SK-N-SH (cell line): ENCODE measurements at regions of chr7 and their contacts with region 1.

Region 1: GRCh38 chr7:66642186-66642585 is 13.5 kb downstream of the KCTD7 start:
- DNase-seq: peak; percentile 34
- H3K4me3 ChIP-seq: no peak overlapping the region
- H3K27ac ChIP-seq: no peak overlapping the region; a peak in 1 of 4 replicates
- H3K4me1 ChIP-seq: peaks cover 0 to 2% of the 10 kb centered on the region in 2 experiments; a peak in 1 of 4 replicates
- H3K27me3 ChIP-seq: no peaks in the 10 kb centered on the region
- CTCF ChIP-seq: no peak
- EP300 ChIP-seq: peak in 1 of 2 experiments; percentile 22; a peak in 1 of 4 replicates
- RAD21 ChIP-seq: no peak

Region 2: GRCh38 chr7:65475734-65476319 is 1166.4 kb before region 1 on chr7:
- CTCF ChIA-PET with region 1: no interaction called
- POLR2A ChIA-PET with region 1: no interaction called
- DNase-seq: no peak
- H3K4me3 ChIP-seq: no peak overlapping the region
- H3K27ac ChIP-seq: no peak overlapping the region
- H3K4me1 ChIP-seq: no peaks in the 10 kb centered on the region
- H3K27me3 ChIP-seq: peaks cover 18% of the 10 kb centered on the region; the same call in 1 of the 2 replicates
- CTCF ChIP-seq: no peak
- EP300 ChIP-seq: no peak
- RAD21 ChIP-seq: no peak

Region 3: DNA sequence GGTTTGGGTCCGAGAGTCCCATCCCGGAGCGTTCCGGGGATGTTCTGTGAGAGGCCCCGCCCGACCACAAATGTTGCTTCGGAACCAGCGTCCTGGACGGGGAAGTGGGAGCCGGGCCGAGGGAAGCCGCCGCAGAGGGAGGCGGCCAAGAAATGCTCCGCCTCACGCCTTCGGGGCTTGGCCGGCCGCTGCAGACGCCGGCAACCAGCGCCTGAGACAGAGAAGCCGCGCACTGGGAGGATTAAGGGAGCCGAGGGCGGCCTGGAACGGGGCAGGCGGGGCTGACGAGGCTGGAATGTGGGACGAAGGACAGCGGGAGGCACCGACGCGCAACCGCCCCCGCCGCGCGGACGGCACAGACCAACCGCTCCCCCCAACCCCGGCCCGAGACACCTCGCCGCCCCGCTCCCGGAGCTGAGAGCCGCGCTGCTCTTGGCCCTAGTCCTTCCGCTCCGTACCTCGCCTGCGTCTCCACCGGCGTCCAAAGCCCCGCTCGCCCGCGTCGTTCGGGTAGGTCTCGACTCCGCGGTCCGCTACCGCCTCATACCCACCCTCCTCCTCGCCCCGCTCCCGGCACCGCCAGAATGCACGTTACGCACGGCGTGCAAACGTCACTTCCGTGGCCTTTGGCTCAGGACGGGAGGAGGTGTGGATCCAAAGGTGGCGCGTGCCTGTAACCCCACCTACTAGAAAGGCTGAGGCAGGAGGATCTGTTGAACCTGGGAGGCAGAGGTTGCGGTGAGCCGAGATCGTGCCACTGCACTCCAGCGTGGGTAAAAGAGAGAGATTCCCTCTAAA is 50.2 kb before region 1 on chr7:
- CTCF ChIA-PET with region 1: no interaction called
- POLR2A ChIA-PET with region 1: no interaction called
- DNase-seq: peak; percentile 98
- H3K4me3 ChIP-seq: peak overlapping the region; percentile 72 to 98
- H3K27ac ChIP-seq: peak overlapping the region; percentile 84 to 95
- H3K4me1 ChIP-seq: peaks cover 12 to 13% of the 10 kb centered on the region in 2 experiments; a peak in 3 of 4 replicates
- H3K27me3 ChIP-seq: no peaks in the 10 kb centered on the region
- CTCF ChIP-seq: no peak
- EP300 ChIP-seq: peak in 1 of 2 experiments; percentile 41; a peak in 1 of 4 replicates
- RAD21 ChIP-seq: no peak

Region 4: DNA sequence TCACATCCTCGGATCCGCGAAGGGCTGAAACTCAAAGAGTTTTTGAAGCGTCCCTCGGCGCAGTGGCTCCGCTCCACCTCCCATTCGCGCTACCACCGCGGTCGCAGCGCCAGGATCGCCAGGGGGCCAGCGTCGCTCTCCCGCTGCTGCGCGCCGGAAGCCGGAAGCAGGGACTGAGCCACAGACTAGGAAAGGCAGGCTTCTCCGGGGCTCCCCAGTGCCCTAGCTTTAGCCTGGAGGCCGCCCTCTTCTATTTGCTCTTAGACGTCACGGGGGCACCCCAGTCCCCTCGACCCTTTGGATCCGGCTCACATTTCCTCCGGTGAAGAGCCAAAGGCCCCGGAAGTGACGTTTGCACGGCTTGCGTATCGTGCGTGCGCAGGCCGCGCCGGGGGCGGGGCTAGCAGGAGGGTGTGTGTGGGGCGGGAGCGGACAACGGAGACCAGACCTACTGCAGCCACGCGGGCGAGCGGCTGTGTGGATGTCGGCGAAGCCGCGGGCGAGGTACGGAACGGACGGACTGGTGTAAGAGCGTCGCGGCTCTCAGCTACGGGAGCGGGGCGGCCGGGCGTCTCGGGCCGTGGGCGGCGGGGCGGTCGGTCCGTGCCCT is 12.0 kb after region 1 on chr7:
- CTCF ChIA-PET with region 1: interaction called, 11 read pairs
- POLR2A ChIA-PET with region 1: interaction called, 3 read pairs
- DNase-seq: peak; percentile 100
- H3K4me3 ChIP-seq: peak overlapping the region; percentile 67 to 99
- H3K27ac ChIP-seq: peak overlapping the region; percentile 93 to 98
- H3K4me1 ChIP-seq: peaks cover 0 to 10% of the 10 kb centered on the region in 2 experiments; a peak in 2 of 4 replicates
- H3K27me3 ChIP-seq: no peaks in the 10 kb centered on the region
- CTCF ChIP-seq: no peak; the same call in 1 of the 2 replicates
- EP300 ChIP-seq: 0 out of 4 replicates have a peak, but pooled peaks of 1 of the 2 experiments have one; percentile 29
- RAD21 ChIP-seq: no peak